ENCODE measurements at regions of chr4 and their contacts with region 1.

Region 1: GRCh38 chr4:1899149-1900086 is 28.2 kb downstream of the NSD2 start:
- DNase-seq: no peak
- H3K4me3 ChIP-seq: no peak overlapping the region
- CTCF ChIP-seq: peak; percentile 74

Region 2: DNA sequence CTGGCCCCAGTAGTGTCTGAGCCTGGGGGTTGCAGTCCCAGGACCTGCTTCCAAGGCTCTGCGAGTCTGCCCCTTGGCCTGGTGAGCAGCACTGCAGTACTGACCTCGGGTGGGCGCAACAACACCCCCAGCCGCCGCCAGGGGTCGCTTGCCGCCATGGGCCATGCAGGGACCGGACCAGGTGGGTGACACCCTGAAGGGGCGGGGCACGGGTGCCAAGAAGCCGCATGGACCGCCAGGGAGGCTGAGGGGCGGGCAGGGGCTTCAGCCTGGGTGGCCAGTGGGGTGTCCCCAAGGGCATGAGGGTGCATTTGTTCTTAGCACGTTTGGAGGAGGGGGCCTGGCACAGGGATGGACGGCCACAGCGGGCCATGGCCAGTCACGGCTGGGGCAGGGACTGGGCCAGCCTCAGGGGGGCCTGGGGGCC is 153.1 kb before region 1 on chr4:
- CTCF ChIA-PET with region 1: interaction called, 76 read pairs
- POLR2A ChIA-PET with region 1: no interaction called
- DNase-seq: no peak
- H3K4me3 ChIP-seq: no peak overlapping the region
- CTCF ChIP-seq: peak; percentile 98

Region 3: DNA sequence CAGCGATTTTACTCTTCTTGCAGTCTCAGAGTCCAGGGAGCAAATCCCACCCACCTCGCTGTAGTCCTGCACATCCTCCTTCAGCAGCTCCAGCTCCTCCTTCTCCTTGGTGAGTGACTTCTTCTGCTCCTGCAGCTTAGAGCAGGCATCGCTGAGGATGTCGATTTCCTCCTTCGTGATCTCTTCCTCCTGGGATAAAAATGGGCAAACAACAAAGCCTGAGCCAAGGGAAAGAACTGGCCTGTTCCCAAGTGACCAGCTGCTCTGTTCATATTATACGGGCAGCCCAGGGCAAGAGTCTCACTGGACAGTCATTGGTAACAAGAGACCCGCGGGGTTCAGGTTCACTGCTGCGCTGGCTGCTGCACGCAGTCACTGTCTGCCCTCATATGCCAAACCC is 80.1 kb before region 1 on chr4:
- CTCF ChIA-PET with region 1: interaction called, 99 read pairs
- POLR2A ChIA-PET with region 1: no interaction called
- DNase-seq: no peak
- H3K4me3 ChIP-seq: no peak overlapping the region
- CTCF ChIP-seq: no peak

Region 4: GRCh38 chr4:1842993-1843448 is 56.4 kb before region 1 on chr4:
- CTCF ChIA-PET with region 1: interaction called, 76 read pairs
- POLR2A ChIA-PET with region 1: no interaction called
- DNase-seq: peak; percentile 44
- H3K4me3 ChIP-seq: no peak overlapping the region
- CTCF ChIP-seq: no peak

Region 5: GRCh38 chr4:1872870-1873269 is 26.5 kb before region 1 on chr4:
- CTCF ChIA-PET with region 1: interaction called, 29 read pairs
- POLR2A ChIA-PET with region 1: no interaction called
- DNase-seq: no peak
- H3K4me3 ChIP-seq: peak overlapping the region; percentile 70
- CTCF ChIP-seq: no peak

Region 6: GRCh38 chr4:1910643-1911042 is 11.2 kb after region 1 on chr4:
- CTCF ChIA-PET with region 1: interaction called, 134 read pairs
- POLR2A ChIA-PET with region 1: no interaction called
- DNase-seq: peak; percentile 12
- H3K4me3 ChIP-seq: no peak overlapping the region
- CTCF ChIP-seq: peak; percentile 69

Region 7: GRCh38 chr4:1928356-1929239 is 29.2 kb after region 1 on chr4:
- CTCF ChIA-PET with region 1: interaction called, 18 read pairs
- POLR2A ChIA-PET with region 1: no interaction called
- DNase-seq: no peak
- H3K4me3 ChIP-seq: no peak overlapping the region
- CTCF ChIP-seq: no peak

Region 8: GRCh38 chr4:2071912-2072867 is 172.8 kb after region 1 on chr4:
- CTCF ChIA-PET with region 1: no interaction called
- POLR2A ChIA-PET with region 1: no interaction called
- DNase-seq: no peak
- H3K4me3 ChIP-seq: no peak overlapping the region
- CTCF ChIP-seq: no peak

Region 9: GRCh38 chr4:2255501-2256155 is 356.2 kb after region 1 on chr4:
- CTCF ChIA-PET with region 1: no interaction called
- POLR2A ChIA-PET with region 1: no interaction called
- DNase-seq: no peak
- H3K4me3 ChIP-seq: no peak overlapping the region
- CTCF ChIP-seq: no peak